SK-MEL-5 (cell line): ENCODE measurements at regions of chr11 and their contacts with region 1.

Region 1: GRCh38 chr11:72652873-72653630 is 21.2 kb downstream of the PDE2A start:
- DNase-seq: no peak

Region 2: DNA sequence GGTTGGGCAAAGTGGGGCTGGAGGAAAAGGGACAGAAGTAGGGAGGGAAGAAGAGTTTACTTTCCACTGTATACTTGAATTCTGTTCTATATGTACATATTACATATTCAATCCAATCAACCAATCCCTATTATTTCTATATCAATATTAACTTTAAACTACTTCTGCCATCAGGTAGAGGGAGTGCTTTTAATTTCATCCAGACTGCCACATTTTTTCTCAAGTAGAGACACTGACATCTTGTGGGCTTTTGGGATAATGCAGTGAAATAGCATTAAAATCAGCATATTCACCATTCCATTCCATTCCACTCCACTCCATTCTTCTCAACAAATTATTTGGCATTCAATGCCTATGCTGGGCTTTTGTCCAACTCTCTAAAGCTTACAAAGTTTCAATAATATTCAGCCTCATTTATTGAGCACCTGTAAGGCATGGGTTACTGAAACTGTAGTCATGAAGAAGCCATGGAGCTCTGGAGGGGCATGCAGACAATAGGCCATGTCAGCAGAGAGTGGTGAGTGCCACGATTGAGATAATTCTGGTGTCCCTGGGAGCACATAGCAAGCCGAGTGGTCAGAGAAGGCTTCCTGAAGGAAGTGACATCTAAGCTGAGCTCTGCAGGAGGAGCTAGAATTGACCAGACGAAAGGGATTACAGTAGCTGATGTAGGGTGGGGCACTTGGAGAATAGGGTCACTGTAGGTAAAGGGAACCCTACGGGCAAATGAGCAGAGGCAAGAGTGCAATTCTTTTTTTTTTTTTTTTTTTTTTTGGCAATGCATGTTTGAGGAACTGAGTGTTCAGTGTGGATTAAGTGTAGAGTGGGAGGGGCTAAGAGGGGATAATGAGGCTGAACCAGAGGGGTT is 205.9 kb before region 1 on chr11:
- in situ Hi-C with region 1: loop called (anchors 10 kb)
- DNase-seq: peak; percentile 89